ENCODE measurements at regions of chr1 and their contacts with region 1.

Region 1: GRCh38 chr1:93629099-93630059 is 52.3 kb downstream of the BCAR3 start:
- DNase-seq: peak in 1 of 2 donors; percentile 80
- H3K4me3 ChIP-seq: no peak overlapping the region
- H3K27ac ChIP-seq: peak overlapping the region; percentile 71 to 75
- H3K4me1 ChIP-seq: no peaks in the 10 kb centered on the region
- H3K27me3 ChIP-seq: no peaks in the 10 kb centered on the region
- CTCF ChIP-seq: peak; percentile 81 to 94 (median 89)
- POLR2A ChIP-seq: no peak

Region 2: GRCh38 chr1:93437976-93438605 is 191.3 kb before region 1 on chr1:
- intact Hi-C with region 1: loop called (anchors 10 kb)
- DNase-seq: no peak
- H3K4me3 ChIP-seq: no peak overlapping the region
- H3K27ac ChIP-seq: no peak overlapping the region
- H3K4me1 ChIP-seq: no peaks in the 10 kb centered on the region
- H3K27me3 ChIP-seq: no peaks in the 10 kb centered on the region
- CTCF ChIP-seq: peak; percentile 23 to 75 (median 64)
- POLR2A ChIP-seq: no peak

Region 3: DNA sequence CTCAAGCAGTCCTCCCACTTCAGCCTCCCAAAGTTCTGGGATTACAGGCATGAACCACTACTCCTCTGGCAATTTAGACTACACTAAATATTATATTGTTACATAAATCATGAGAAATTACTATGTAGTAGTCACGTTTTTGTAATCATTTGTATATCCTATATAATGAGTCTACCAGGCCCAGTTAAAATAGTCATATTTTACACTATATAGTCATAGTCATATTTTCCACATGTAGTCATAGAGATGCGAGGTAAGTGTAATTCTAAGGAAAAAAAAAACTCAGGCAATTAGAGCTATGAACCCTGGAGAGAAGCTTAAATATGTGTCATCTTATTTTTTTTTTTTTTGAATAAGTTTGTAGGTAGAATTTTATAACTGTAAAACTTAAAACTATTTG is 91.5 kb before region 1 on chr1:
- intact Hi-C with region 1: no loop called
- DNase-seq: no peak
- H3K4me3 ChIP-seq: no peak overlapping the region
- H3K27ac ChIP-seq: no peak overlapping the region
- H3K4me1 ChIP-seq: no peaks in the 10 kb centered on the region
- H3K27me3 ChIP-seq: no peaks in the 10 kb centered on the region
- CTCF ChIP-seq: no peak
- POLR2A ChIP-seq: no peak

Region 4: DNA sequence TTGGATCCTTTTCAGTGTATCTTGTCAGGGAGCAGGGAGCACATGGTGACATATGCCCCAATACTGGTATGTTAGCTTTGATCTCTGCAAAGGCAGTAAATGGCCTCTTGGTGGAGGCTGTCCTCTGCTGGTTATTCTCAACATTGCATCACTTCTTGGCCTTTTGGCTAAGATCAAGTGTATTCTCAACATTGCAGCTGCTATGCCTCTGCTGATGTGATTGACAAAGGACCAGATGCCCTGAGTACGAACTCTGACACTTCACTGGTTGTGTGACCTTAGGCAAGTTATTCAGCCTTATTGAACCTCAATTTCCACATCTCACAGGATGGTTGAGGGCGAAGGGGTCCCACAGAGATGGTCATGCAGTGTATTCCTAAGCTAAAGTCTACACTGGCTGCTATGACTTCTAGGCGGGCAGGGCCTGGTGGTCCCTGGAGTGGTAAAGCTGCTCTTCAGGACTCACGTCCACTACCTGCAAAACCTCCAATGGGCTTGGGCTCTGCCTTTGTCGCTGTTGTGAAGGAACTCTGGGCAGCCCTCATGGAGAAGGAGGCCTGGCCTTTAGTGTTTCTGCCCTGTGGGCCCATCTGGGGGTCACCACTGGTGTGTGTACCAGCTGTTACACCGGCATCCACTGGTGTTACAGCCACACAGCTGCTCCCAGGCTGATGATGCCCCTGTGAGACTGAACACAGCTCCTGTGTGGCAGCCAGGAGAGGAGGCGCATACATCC is 184.8 kb after region 1 on chr1:
- intact Hi-C with region 1: loop called (anchors 10 kb)
- DNase-seq: peak in 1 of 2 donors; percentile 66
- H3K4me3 ChIP-seq: no peak overlapping the region
- H3K27ac ChIP-seq: no peak overlapping the region
- H3K4me1 ChIP-seq: no peaks in the 10 kb centered on the region
- H3K27me3 ChIP-seq: no peaks in the 10 kb centered on the region
- CTCF ChIP-seq: peak; percentile 92 to 99 (median 98)
- POLR2A ChIP-seq: no peak

Region 5: DNA sequence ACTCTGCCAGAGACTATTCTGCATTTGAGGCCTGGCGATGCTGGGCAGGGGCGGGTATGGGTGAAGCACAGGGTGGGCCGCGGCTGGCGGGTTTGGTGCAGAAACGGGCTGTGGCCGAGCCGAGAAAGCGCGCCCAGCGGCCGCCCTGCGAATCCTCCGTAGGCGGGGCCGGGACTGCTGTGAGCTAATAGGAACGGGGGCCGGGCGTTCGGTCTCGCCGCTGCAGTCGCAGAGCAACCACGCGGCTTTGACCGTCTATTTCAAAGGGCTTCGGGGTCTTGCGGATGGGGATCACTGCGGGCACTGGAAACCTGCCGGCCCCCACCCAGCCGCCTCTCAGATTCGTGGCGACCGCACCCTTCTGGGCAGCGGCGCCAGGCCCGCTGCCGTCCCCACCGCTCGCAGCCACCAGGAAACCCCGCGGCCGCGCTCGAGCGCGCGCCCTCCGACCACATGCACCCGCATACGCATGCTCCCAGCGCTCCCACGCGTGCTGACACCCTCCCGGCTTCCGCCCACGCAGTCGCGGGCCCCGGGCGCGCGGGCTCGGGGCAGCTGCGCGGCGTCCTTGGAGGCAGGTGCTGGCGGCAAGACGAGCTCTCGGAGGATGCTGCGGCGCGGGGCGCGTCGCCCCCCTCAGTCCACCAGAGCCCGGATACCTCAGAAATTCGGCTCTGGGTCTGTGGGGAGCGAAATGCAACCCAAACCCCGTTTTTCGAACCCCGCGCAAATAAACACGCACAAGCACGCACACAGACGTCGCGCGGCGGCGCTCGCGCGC is 217.0 kb after region 1 on chr1:
- intact Hi-C with region 1: loop called (anchors 10 kb)
- DNase-seq: peak; percentile 86 to 91
- H3K4me3 ChIP-seq: peak overlapping the region; percentile 62 to 90 (median 74)
- H3K27ac ChIP-seq: peak overlapping the region; percentile 95 to 98
- H3K4me1 ChIP-seq: peaks cover 0 to 2% of the 10 kb centered on the region in 2 donors
- H3K27me3 ChIP-seq: no peaks in the 10 kb centered on the region
- CTCF ChIP-seq: peak; percentile 45 to 54 (median 48)
- POLR2A ChIP-seq: peak; percentile 14